ENCODE measurements at regions of chr15 and their contacts with region 1.

Region 1: GRCh38 chr15:85485956-85486567 is 105.7 kb downstream of the AKAP13 start:
- DNase-seq: no peak
- ATAC-seq: peak; percentile 90
- H3K4me3 Mint-ChIP-seq: no peak overlapping the region
- H3K27ac Mint-ChIP-seq: peak overlapping the region; percentile 64
- H3K4me1 Mint-ChIP-seq: peaks cover 75% of the 10 kb centered on the region
- H3K27me3 Mint-ChIP-seq: no peaks in the 10 kb centered on the region
- CTCF ChIP-seq: peak; percentile 72

Region 2: GRCh38 chr15:85386261-85386660 is 99.8 kb before region 1 on chr15:
- CTCF ChIA-PET with region 1: no interaction called
- POLR2A ChIA-PET with region 1: no interaction called
- intact Hi-C with region 1: no loop called
- DNase-seq: no peak
- ATAC-seq: no peak
- H3K4me3 Mint-ChIP-seq: no peak overlapping the region
- H3K27ac Mint-ChIP-seq: no peak overlapping the region
- H3K4me1 Mint-ChIP-seq: peaks cover 48% of the 10 kb centered on the region
- H3K27me3 Mint-ChIP-seq: no peaks in the 10 kb centered on the region
- CTCF ChIP-seq: no peak

Region 3: DNA sequence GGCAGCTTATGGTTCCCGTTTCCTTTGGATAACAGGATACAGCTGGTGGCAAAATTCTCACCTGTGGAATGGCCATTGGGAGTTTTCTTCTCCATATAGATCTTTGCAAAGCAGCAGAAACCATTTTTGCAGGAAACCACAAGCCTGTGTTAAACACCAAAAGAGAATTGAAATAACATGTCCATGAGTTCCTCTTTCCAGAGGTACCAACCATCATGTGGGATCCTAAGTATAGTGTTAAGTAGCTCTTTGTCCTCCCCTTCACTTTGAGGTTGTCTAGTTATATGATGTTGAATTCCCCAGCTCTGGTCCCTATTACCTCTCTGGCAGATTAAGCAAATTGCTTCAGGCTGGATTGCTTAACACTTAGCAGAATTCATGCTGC is 10.8 kb before region 1 on chr15:
- CTCF ChIA-PET with region 1: interaction called, 6 read pairs
- POLR2A ChIA-PET with region 1: interaction called, 3 read pairs
- intact Hi-C with region 1: loop called (anchors 1 kb)
- DNase-seq: no peak
- ATAC-seq: peak; percentile 50
- H3K4me3 Mint-ChIP-seq: peak overlapping the region; percentile 65
- H3K27ac Mint-ChIP-seq: peak overlapping the region; percentile 82
- H3K4me1 Mint-ChIP-seq: peaks cover 92% of the 10 kb centered on the region
- H3K27me3 Mint-ChIP-seq: no peaks in the 10 kb centered on the region
- CTCF ChIP-seq: no peak

Region 4: DNA sequence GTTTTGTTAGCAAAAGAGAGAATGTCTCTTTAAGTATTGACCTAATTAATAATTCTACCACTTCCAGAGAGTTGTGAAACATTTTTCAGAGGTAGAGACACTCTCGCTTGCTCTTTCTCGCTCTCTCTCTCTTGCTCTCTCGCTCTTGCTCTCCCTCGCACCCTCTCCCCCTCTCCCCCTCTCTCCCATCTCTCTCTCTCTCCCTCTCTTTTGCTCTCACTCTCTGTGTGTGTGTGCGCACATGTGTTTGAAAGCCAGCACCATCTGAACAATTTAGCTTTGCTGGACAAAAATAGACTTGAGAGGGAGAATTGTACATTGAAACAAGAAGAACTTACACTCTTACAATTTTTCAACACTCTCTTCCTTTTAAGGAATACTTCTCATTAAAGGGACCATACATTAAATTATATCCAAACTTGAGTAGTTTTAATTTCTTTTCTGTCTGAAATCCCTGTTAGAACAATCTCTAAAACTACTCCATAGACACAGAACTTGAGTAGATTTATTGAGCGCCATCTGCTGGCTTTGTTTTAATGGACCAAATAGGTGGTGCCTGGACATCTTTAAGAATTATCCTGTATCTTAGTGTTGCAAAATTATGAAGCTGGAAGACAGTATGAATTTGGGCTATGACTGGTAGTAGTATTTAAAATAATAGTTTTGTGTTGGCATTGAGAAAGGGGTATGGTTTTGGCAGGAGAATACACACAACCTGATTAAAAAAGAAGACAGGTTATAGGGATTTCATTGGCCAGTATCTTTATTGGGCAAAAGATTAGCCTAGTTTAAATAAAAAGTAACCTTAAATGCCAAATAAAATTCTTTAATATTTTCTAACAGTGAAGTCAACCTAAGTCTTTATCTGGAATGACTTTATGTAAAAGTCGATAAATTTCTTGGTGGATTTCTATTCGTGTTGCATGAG is 19.0 kb after region 1 on chr15:
- CTCF ChIA-PET with region 1: interaction called, 13 read pairs
- POLR2A ChIA-PET with region 1: no interaction called
- intact Hi-C with region 1: loop called (anchors 1 kb)
- DNase-seq: no peak
- ATAC-seq: peak; percentile 56
- H3K4me3 Mint-ChIP-seq: no peak overlapping the region
- H3K27ac Mint-ChIP-seq: no peak overlapping the region
- H3K4me1 Mint-ChIP-seq: peaks cover 49% of the 10 kb centered on the region
- H3K27me3 Mint-ChIP-seq: no peaks in the 10 kb centered on the region
- CTCF ChIP-seq: peak; percentile 60

Region 5: DNA sequence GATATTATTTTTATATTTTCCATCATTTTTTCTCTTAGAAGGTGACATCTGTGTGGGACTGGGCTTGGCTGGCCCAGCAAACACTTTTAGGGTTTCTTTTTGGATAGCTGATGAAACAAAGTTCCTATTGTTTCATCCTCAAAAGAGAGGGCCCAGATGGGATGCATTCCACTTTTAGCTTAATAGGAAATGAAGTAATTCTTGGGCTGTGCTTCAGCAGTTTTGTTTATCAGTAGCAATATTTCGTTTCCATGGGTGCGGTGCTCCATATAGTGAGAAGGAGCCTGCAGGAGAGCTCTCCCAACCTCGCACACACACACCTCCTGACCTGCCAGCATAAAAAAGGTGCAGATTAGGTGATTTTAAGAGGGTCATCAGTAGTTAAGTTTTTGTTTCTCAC is 41.8 kb after region 1 on chr15:
- CTCF ChIA-PET with region 1: no interaction called
- POLR2A ChIA-PET with region 1: no interaction called
- intact Hi-C with region 1: no loop called
- DNase-seq: no peak
- ATAC-seq: no peak
- H3K4me3 Mint-ChIP-seq: no peak overlapping the region
- H3K27ac Mint-ChIP-seq: peak overlapping the region; percentile 61
- H3K4me1 Mint-ChIP-seq: peaks cover 79% of the 10 kb centered on the region
- H3K27me3 Mint-ChIP-seq: no peaks in the 10 kb centered on the region
- CTCF ChIP-seq: no peak

Region 6: DNA sequence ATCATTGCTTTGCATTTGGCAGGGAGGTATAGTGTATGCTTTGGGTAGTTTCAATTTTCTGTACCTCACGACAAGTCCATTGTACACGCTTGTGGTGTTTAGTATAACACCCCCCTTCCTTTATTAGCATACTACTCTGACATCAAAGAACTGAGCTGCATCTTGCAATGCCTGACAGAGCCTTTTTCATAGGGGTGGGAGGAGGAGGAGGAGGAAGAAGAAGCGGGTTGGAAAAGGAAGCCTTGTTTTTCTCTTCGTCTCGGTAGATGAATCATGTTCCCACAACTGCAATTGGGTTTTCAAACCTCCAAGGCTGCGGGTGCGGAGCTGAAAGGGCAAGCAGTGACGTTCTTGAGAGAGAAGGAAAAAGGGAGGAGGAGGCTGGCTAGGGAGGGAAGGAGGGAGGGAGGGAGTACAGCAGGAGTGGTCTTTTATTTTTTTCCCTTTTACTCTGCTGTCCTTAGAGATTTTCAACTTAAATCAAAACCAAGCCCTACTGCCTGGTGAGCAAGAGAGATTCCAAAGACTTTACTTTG is 133.0 kb after region 1 on chr15:
- CTCF ChIA-PET with region 1: no interaction called
- POLR2A ChIA-PET with region 1: no interaction called
- intact Hi-C with region 1: loop called (anchors 5 kb)
- DNase-seq: no peak
- ATAC-seq: peak; percentile 33
- H3K4me3 Mint-ChIP-seq: no peak overlapping the region
- H3K27ac Mint-ChIP-seq: no peak overlapping the region
- H3K4me1 Mint-ChIP-seq: peaks cover 33% of the 10 kb centered on the region
- H3K27me3 Mint-ChIP-seq: no peaks in the 10 kb centered on the region
- CTCF ChIP-seq: no peak

Region 7: GRCh38 chr15:85707519-85708338 is 221.7 kb after region 1 on chr15:
- CTCF ChIA-PET with region 1: interaction called, 3 read pairs
- POLR2A ChIA-PET with region 1: no interaction called
- intact Hi-C with region 1: loop called (anchors 10 kb)
- DNase-seq: no peak
- ATAC-seq: peak; percentile 23
- H3K4me3 Mint-ChIP-seq: peak overlapping the region; percentile 83
- H3K27ac Mint-ChIP-seq: peak overlapping the region; percentile 98
- H3K4me1 Mint-ChIP-seq: peaks cover 83% of the 10 kb centered on the region
- H3K27me3 Mint-ChIP-seq: no peaks in the 10 kb centered on the region
- CTCF ChIP-seq: no peak

Region 8: GRCh38 chr15:85840065-85840801 is 354.2 kb after region 1 on chr15:
- CTCF ChIA-PET with region 1: no interaction called
- POLR2A ChIA-PET with region 1: no interaction called
- intact Hi-C with region 1: loop called (anchors 1 kb)
- DNase-seq: peak; percentile 75
- ATAC-seq: peak; percentile 97
- H3K4me3 Mint-ChIP-seq: peak overlapping the region; percentile 71
- H3K27ac Mint-ChIP-seq: no peak overlapping the region
- H3K4me1 Mint-ChIP-seq: peaks cover 5% of the 10 kb centered on the region
- H3K27me3 Mint-ChIP-seq: peaks cover 11% of the 10 kb centered on the region
- CTCF ChIP-seq: peak; percentile 64

Measured in activated B cell treated with CpG ODN at 0.5 μM for 24 hours (primary cell).